ENCODE measurements at regions of chr20 and their contacts with region 1.

Region 1: GRCh38 chr20:38973645-38974044 is 11.5 kb downstream of the DHX35 start:
- DNase-seq: peak; percentile 48
- H3K4me3 ChIP-seq: no peak overlapping the region
- H3K27ac ChIP-seq: no peak overlapping the region
- H3K4me1 ChIP-seq: peaks cover 33% of the 10 kb centered on the region
- H3K27me3 ChIP-seq: no peaks in the 10 kb centered on the region
- CTCF ChIP-seq: no peak

Region 2: DNA sequence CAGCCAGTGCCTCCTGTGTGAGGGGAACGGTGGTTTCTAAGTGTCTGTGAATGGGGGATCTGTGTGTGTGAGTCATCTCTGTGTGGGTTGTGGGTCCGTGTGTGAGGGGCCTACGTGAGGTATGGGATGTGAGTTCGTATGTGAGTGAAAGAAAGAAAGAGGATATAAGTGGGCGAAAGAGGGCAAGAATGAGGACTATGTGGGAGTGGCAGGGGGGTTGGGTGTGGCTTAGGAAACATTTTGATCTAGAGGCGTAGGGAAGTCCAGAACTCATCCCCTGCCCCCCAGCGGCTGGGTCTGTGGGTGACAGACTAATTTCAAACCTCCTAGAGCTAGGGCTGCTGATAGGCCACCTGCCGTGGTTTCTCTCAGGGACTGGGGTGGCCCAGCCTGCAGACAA is 24.0 kb after region 1 on chr20:
- CTCF ChIA-PET with region 1: no interaction called
- dilution Hi-C with region 1: no loop called
- in situ Hi-C with region 1: no loop called
- intact Hi-C with region 1: no loop called
- DNase-seq: no peak
- H3K4me3 ChIP-seq: no peak overlapping the region
- H3K27ac ChIP-seq: no peak overlapping the region
- H3K4me1 ChIP-seq: peaks cover 3% of the 10 kb centered on the region
- H3K27me3 ChIP-seq: no peaks in the 10 kb centered on the region
- CTCF ChIP-seq: no peak

Region 3: DNA sequence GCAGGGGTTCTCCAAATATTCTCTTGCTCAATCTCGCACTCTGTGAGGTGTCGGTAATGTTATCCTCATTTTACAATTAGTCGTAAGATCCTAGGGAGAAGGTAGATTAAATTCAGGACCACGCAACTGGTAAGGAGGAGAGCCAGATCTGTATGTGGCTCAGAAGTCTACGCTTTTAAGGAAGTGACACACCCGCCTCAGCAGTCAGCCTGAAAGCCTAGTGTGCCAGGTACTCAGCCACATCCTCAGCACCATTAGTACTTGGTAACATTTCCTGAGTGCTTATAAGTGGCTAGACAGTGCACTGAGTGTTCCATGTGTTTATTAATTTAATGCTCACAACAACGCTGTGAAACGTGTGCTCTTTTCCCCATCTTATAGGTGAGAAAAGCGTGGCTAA is 52.2 kb after region 1 on chr20:
- CTCF ChIA-PET with region 1: no interaction called
- dilution Hi-C with region 1: no loop called
- in situ Hi-C with region 1: no loop called
- intact Hi-C with region 1: loop called (anchors 5 kb)
- DNase-seq: no peak
- H3K4me3 ChIP-seq: no peak overlapping the region
- H3K27ac ChIP-seq: no peak overlapping the region
- H3K4me1 ChIP-seq: peaks cover 10% of the 10 kb centered on the region
- H3K27me3 ChIP-seq: no peaks in the 10 kb centered on the region
- CTCF ChIP-seq: no peak

Measured in mammary epithelial cell (primary cell).